ENCODE measurements at regions of chr4 and their contacts with region 1.

Region 1: GRCh38 chr4:60002603-60003337 is 1197.4 kb upstream of the ADGRL3 start:
- DNase-seq: no peak
- H3K4me3 ChIP-seq: no peak overlapping the region
- CTCF ChIP-seq: no peak
- POLR2A ChIP-seq: no peak

Region 2: GRCh38 chr4:59805176-59805575 is 197.6 kb before region 1 on chr4:
- intact Hi-C with region 1: loop called (anchors 5 kb)
- DNase-seq: no peak
- H3K4me3 ChIP-seq: no peak overlapping the region
- CTCF ChIP-seq: no peak
- POLR2A ChIP-seq: no peak

Region 3: DNA sequence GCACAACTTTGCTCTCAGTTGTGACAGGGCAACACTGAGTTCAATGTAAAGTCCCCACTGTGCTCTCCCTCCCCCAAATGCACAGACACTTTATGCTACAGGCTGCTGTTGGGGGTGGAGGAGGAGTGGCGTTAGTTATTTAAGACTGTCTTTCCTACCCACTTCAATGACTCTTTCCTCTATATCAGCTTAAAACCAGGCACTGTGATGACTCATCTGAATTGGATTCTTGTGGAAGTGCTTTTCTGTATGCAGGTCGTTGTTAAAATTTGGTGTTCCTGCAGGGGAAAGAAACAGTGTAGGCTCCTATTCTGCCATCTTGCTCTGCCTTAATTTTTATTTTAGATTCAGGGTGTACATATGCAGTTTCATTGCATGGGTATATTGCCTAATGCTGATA is 40.2 kb after region 1 on chr4:
- intact Hi-C with region 1: no loop called
- DNase-seq: no peak
- H3K4me3 ChIP-seq: no peak overlapping the region
- CTCF ChIP-seq: no peak
- POLR2A ChIP-seq: no peak

Measured in lower leg skin (tissue), 4 donors.